Astrocyte of the cerebellum (primary cell): ENCODE measurements at regions of chr6 and their contacts with region 1.

Region 1: DNA sequence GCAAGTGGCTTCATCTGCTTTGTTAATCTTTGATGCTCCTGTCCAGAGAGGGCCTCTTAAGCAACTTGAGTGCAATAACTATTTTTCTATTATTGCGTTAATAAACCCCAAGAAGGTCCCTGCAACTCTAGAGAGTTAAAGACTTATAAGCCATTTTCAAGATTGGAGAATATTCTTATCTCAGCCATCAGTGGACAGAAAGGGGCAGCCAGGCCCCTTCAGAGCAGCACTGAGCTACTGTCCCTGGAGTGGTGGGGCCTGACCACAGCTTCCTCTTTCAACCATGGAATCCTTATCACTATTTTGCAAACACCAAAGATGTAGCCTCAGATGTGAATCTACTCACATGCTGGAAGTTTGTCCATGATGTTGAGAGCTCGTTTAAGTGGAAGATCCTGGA is 2.8 kb upstream of the MAS1L start:
- DNase-seq: no peak
- H3K4me3 ChIP-seq: no peak overlapping the region
- CTCF ChIP-seq: no peak

Region 2: GRCh38 chr6:29426655-29427054 is 63.9 kb before region 1 on chr6:
- in situ Hi-C with region 1: loop called (anchors 5 kb)
- DNase-seq: no peak
- H3K4me3 ChIP-seq: no peak overlapping the region
- CTCF ChIP-seq: no peak